ENCODE measurements at regions of chr2 and their contacts with region 1.

Region 1: DNA sequence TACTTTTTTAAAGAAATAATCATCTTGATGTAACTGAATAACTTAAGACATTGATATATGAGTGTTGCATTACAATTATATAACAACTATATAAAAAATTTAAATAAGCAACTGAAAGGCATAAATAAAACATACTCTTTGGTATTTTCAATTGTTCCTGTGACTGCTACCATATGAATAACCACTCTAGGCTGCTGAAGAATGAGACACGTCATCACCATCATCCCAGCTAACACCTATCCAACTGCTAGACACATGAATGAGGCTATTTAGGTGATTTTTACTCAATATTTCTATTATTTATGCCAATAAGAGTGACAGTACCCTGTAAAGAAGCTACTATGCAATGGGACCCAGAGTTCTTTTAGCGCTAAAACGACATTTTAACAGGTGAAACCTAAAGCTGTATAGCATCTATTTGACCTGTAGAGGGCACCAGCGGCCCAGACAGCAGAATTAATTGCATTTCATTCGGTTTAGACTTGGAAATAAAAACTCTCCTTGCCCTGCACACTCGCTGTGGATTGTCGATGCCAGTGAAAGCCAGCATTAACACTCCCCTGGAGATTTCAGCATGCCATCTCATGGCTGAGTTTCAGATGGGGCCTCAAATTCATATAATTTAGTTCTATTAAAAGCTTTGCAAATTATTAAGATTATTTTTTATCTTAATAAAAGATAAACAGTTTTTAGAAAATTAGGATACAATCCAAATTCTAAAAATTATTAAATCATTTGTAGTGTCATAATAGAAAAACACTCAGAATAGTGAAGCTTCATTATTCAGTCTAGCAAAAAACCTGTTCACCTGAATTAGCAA is 89.4 kb upstream of the MAP2 start:
- DNase-seq: no peak
- ATAC-seq: no peak
- H3K4me3 ChIP-seq: no peak overlapping the region
- H3K27ac ChIP-seq: no peak overlapping the region
- H3K4me1 ChIP-seq: no peaks in the 10 kb centered on the region
- H3K27me3 ChIP-seq: no peaks in the 10 kb centered on the region
- CTCF ChIP-seq: peak; percentile 11 to 75 (median 48)
- POLR2A ChIP-seq: no peak

Region 2: GRCh38 chr2:209277444-209277843 is 57.0 kb before region 1 on chr2:
- in situ Hi-C with region 1: no loop called
- intact Hi-C with region 1: no loop called
- DNase-seq: no peak
- ATAC-seq: no peak
- H3K4me3 ChIP-seq: no peak overlapping the region
- H3K27ac ChIP-seq: no peak overlapping the region
- H3K4me1 ChIP-seq: no peaks in the 10 kb centered on the region
- H3K27me3 ChIP-seq: no peaks in the 10 kb centered on the region
- CTCF ChIP-seq: no peak
- POLR2A ChIP-seq: no peak

Region 3: DNA sequence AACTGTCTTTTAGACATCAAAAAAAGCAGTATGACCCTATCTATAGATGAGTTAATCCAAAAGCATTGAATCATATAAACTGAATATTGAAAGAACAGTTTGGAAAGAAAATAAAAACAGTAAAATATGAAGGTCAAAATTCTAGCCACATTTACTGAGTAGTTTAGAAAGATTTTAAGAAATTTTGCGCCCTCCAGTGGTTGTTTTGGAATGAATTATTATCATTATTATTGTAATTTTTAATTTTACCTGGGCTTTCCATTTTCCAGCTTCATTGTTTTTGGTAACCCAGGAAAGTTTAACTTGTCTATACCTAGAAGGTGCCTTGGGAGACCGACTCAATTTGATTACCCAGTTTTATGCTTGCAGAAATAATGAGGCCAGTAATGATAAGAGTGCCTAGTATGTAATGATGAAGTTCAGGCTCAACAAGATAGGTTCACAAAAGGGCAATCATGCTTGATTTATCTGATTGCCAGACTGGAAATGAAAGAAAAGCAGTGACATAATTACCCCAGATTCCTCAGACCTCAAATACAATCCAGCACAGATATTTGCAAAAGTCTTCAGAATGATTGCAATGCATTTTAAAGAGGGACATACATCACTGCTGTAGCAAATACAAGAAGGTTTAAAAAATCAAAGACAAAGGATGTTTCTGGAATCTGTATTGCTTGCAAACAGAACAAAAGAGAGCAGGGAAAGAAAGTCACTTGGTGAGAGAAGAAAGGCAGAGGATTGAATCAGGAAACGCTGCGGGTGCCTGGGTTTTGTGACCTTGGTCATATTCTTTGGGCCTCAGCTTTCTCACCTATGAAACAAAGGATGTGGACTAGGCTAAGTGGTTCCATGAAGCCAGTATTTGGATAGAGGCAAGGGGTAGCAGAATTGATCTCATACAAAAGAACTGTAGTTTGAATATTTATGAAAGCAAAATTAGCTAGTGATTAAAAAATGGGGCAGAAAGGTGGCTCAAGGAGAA is 243.3 kb after region 1 on chr2:
- in situ Hi-C with region 1: loop called in 1 of 4 experiments (anchors 25 kb)
- intact Hi-C with region 1: no loop called
- DNase-seq: no peak
- ATAC-seq: no peak
- H3K4me3 ChIP-seq: no peak overlapping the region
- H3K27ac ChIP-seq: no peak overlapping the region
- H3K4me1 ChIP-seq: peaks cover 0 to 5% of the 10 kb centered on the region in 2 donors
- H3K27me3 ChIP-seq: no peaks in the 10 kb centered on the region
- CTCF ChIP-seq: peak in 2 of 5 experiments; percentile 26 to 44
- POLR2A ChIP-seq: no peak

Region 4: DNA sequence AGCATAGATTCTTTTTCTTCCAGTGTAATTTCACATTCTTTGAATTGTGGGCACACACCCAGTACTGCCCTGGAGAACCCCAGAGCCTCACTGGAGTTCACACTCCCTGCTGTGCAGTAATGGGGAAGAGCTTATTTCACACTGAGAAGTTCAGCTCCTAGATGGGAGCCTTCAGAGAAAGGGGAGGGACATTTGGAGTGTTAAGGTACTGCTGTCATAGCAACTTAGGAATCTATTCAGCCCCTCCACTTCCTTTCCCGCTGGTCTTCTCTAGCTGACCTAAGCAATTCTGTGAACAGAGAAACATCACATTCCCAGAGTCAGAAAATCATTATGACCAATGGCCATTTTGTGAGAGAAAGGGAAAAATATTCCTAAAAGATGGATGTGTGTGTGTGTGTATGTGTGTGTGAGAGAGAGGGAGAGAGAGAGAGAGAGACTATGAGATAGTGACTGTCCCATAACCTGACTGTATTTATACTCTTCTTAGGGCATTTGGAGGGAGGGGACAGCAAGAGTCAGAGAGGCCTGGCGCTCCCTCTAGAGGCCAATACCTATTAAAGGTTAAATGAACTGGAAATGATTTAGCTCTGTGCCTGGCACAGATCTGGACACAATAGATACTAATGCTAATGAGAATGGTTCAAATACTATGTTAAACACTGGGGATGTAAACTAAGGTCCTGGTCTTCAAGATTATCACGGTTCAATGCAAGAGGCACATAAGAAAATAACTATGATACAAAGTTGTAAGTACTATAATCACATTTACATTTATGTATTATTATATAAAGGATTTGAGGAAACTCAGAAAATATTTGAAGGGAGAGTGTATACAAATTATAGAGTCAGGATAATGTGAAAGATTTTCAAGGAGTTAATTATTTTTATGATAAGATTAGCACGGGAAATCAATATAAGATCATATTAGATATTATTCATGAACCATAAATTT is 626.5 kb after region 1 on chr2:
- in situ Hi-C with region 1: loop called in 1 of 4 experiments (anchors 25 kb)
- intact Hi-C with region 1: no loop called
- DNase-seq: no peak
- ATAC-seq: no peak
- H3K4me3 ChIP-seq: no peak overlapping the region
- H3K27ac ChIP-seq: no peak overlapping the region
- H3K4me1 ChIP-seq: no peaks in the 10 kb centered on the region
- H3K27me3 ChIP-seq: no peaks in the 10 kb centered on the region
- CTCF ChIP-seq: peak in 4 of 5 experiments; percentile 25 to 60 (median 36)
- POLR2A ChIP-seq: no peak

Measured in gastrocnemius medialis (tissue), 4 donors.